Mucosa of descending colon (tissue), 3 donors: ENCODE measurements at regions of chr7 and their contacts with region 1.

Region 1: DNA sequence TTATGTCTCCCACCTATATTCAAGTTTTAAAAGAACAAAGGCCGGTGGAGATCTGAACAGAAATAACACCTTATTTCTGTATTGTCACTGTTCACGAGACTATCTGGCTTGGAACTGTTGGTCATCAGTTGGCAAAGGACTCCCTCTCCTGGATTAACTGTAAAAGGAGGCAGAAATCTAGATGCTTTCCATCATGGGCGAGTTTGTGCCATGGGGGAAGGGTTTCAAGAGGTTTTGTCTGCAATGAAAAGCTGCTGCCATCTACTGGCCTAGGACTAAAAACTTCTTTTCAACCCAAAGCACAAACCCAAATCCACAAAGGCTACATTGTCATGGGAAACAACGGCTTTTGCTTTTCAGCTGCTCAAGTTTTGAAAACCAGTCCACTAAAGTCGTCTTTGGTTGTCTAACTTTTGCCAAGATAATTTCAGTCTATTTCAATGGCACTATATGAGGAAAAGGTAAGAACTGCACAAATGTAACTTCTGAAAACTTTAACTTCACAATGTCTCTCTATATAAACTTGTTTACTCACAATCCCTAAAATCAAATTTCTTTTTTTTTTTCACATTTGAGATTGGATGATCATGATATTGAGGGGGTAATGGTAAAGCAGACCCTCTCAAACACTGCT is 196.8 kb downstream of the SKAP2 start:
- DNase-seq: peak in 2 of 3 donors; percentile 34 to 76
- ATAC-seq: peak; percentile 96
- H3K4me3 ChIP-seq: no peak overlapping the region
- H3K4me1 ChIP-seq: no peaks in the 10 kb centered on the region
- CTCF ChIP-seq: peak; percentile 38

Region 2: DNA sequence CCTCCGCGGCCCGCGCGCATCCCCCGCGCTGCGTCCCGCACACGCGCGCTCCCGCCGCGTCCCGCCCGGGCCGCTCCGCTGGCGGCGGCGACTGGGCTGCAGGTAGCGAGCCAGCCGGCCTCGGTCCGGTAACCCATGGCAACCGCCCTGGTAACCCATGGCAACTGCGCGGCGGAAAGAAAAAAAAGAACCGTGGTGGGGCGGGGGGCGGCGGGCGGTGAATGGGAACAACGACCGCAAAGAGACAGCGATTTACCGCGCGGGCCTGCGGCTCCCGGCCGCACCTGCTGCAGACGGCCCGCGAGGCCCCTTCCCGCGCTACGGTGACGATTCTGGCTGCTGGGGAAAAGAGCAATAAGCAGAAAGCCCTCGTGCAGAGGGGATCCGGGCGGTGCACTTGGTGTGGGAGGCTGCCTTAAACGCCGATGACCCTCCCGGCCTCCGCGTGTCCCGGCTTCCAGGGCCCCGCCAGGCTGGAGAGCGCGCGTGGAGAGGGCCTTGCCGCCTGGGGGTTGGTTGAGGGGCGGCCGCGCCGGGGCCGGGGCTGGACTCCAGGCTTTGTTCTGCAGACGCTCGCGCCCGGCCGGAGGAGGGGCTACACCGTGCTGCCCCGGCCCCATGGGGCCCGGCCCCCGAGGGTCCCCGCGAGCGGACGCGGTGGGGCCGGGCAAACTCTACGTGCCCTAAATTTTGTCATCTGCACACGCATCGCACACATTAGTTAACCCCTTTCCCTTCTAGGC is 291.3 kb before region 1 on chr7:
- intact Hi-C with region 1: loop called (anchors 5 kb)
- DNase-seq: peak; percentile 39 to 69 (median 63)
- ATAC-seq: peak; percentile 70
- H3K4me3 ChIP-seq: peak overlapping the region; percentile 17
- H3K4me1 ChIP-seq: no peaks in the 10 kb centered on the region
- CTCF ChIP-seq: no peak